CD8-positive, alpha-beta T cell (primary cell): ENCODE measurements at regions of chr7 and their contacts with region 1.

Region 1: GRCh38 chr7:155738652-155739537 is 73.4 kb downstream of the SHH start:
- DNase-seq: peak; percentile 41 to 81 (median 67)
- ATAC-seq: peak; percentile 86
- H3K4me3 ChIP-seq: no peak overlapping the region
- H3K4me3 Mint-ChIP-seq: peak overlapping the region; percentile 1
- H3K27ac ChIP-seq: peak overlapping the region in 1 of 2 experiments; percentile 29
- H3K27ac Mint-ChIP-seq: peak overlapping the region; percentile 55
- H3K4me1 ChIP-seq: peaks cover 30% of the 10 kb centered on the region
- H3K4me1 Mint-ChIP-seq: peaks cover 43% of the 10 kb centered on the region
- H3K27me3 ChIP-seq: no peaks in the 10 kb centered on the region
- H3K27me3 Mint-ChIP-seq: no peaks in the 10 kb centered on the region
- CTCF ChIP-seq: peak; percentile 64

Region 2: DNA sequence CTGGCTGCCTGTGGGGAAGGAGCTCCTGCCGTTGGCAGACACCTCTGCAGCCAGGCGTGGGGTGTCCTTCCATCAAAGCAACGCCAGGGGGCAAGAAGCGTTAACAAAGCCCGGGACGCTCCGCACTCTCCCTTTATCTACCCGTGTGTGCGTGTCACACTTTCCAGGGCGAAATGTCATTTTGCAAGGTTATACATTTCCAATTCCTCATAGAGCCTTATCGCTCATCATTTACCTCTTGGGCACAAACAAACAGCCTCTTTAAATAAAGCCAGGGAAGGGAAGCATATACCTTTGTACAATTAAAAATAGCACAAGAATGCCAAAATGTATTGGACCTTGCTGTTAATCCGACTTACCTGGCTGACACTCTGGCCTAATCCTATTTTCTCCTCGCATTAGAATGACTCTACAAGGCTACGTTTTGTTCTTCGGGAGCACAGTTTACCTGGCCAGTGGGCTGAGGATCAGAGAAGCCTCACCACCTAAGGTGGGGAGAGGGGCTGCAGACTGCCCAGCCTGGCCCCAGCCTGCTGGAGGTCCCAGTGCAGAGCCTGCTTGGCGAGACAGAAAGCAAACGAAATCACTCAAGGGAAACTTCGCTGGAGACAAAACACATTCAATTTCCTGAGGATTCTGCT is 358.6 kb before region 1 on chr7:
- CTCF ChIA-PET with region 1: no interaction called
- POLR2A ChIA-PET with region 1: no interaction called
- intact Hi-C with region 1: loop called in 1 of 2 experiments (anchors 5 kb)
- DNase-seq: peak; percentile 11 to 73 (median 64)
- ATAC-seq: peak; percentile 85
- H3K4me3 ChIP-seq: no peak overlapping the region
- H3K4me3 Mint-ChIP-seq: no peak overlapping the region
- H3K27ac ChIP-seq: no peak overlapping the region
- H3K27ac Mint-ChIP-seq: no peak overlapping the region
- H3K4me1 ChIP-seq: peaks cover 34% of the 10 kb centered on the region
- H3K4me1 Mint-ChIP-seq: peaks cover 26% of the 10 kb centered on the region
- H3K27me3 ChIP-seq: peaks cover 34 to 39% of the 10 kb centered on the region in 2 experiments
- H3K27me3 Mint-ChIP-seq: peaks cover 70% of the 10 kb centered on the region
- CTCF ChIP-seq: peak; percentile 71

Region 3: DNA sequence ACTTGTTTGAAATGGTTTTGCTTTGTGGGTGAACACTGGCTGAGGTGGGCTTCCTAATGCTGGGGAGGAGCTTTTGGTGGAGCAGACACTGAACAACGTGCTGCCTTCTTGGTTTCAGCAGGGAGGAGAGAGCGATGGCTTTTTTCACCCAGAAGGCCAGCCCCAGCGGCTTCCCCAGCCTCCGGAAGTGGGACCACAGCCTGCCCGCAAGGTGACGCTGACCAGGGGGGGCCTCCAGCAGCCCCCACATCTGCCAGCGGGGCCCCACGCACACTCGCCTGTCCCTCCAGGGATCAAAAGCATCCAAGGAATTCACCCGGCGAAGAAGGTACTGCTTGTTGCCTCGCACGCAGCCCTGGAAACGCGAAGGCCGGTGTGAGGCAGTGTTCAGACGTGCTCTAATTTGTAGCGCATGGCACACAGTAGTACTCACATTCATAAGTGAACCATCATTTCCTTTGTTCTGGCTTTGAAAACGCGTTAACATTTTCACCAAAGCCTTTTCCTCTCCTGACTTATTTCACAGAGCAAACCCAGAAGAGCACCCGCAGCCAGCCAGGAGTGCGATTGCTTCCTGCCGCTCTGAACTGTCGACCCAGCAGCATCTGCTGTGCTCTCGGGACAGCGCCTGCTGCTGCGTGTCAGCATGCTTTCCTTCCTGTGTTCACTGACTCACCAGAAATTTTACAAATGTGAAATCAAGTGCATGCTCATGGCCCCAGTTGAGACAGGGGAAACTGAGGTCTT is 25.0 kb after region 1 on chr7:
- CTCF ChIA-PET with region 1: interaction called, 7 read pairs
- POLR2A ChIA-PET with region 1: no interaction called
- intact Hi-C with region 1: loop called (anchors 2 kb)
- DNase-seq: peak in 8 of 9 experiments; percentile 23 to 80 (median 60)
- ATAC-seq: peak; percentile 80
- H3K4me3 ChIP-seq: peak overlapping the region in 1 of 2 experiments; percentile 28
- H3K4me3 Mint-ChIP-seq: peak overlapping the region; percentile 78
- H3K27ac ChIP-seq: peak overlapping the region; percentile 26 to 86
- H3K27ac Mint-ChIP-seq: peak overlapping the region; percentile 91
- H3K4me1 ChIP-seq: peaks cover 31% of the 10 kb centered on the region
- H3K4me1 Mint-ChIP-seq: peaks cover 54% of the 10 kb centered on the region
- H3K27me3 ChIP-seq: no peaks in the 10 kb centered on the region
- H3K27me3 Mint-ChIP-seq: no peaks in the 10 kb centered on the region
- CTCF ChIP-seq: no peak